ENCODE measurements at regions of chr9 and their contacts with region 1.

Region 1: GRCh38 chr9:72280913-72281500 is 84.0 kb downstream of the ZFAND5 start:
- DNase-seq: peak; percentile 79
- H3K4me3 Mint-ChIP-seq: no peak overlapping the region
- H3K27ac Mint-ChIP-seq: no peak overlapping the region
- H3K4me1 Mint-ChIP-seq: no peaks in the 10 kb centered on the region
- H3K27me3 Mint-ChIP-seq: no peaks in the 10 kb centered on the region

Region 2: GRCh38 chr9:72292256-72292682 is 11.3 kb after region 1 on chr9:
- CTCF ChIA-PET with region 1: interaction called, 51 read pairs
- POLR2A ChIA-PET with region 1: no interaction called
- intact Hi-C with region 1: no loop called
- DNase-seq: no peak
- H3K4me3 Mint-ChIP-seq: no peak overlapping the region
- H3K27ac Mint-ChIP-seq: no peak overlapping the region
- H3K4me1 Mint-ChIP-seq: no peaks in the 10 kb centered on the region
- H3K27me3 Mint-ChIP-seq: peaks cover 7% of the 10 kb centered on the region

Region 3: GRCh38 chr9:72599879-72600534 is 319.0 kb after region 1 on chr9:
- CTCF ChIA-PET with region 1: interaction called, 105 read pairs
- POLR2A ChIA-PET with region 1: no interaction called
- intact Hi-C with region 1: no loop called
- DNase-seq: no peak
- H3K4me3 Mint-ChIP-seq: no peak overlapping the region
- H3K27ac Mint-ChIP-seq: no peak overlapping the region
- H3K4me1 Mint-ChIP-seq: peaks cover 11% of the 10 kb centered on the region
- H3K27me3 Mint-ChIP-seq: no peaks in the 10 kb centered on the region

Region 4: GRCh38 chr9:72827950-72828731 is 547.1 kb after region 1 on chr9:
- CTCF ChIA-PET with region 1: interaction called, 86 read pairs
- POLR2A ChIA-PET with region 1: no interaction called
- intact Hi-C with region 1: no loop called
- DNase-seq: no peak
- H3K4me3 Mint-ChIP-seq: no peak overlapping the region
- H3K27ac Mint-ChIP-seq: no peak overlapping the region
- H3K4me1 Mint-ChIP-seq: no peaks in the 10 kb centered on the region
- H3K27me3 Mint-ChIP-seq: peaks cover 2% of the 10 kb centered on the region

Region 5: GRCh38 chr9:73081979-73082657 is 801.1 kb after region 1 on chr9:
- CTCF ChIA-PET with region 1: interaction called, 3 read pairs
- POLR2A ChIA-PET with region 1: no interaction called
- intact Hi-C with region 1: loop called (anchors 5 kb)
- DNase-seq: no peak
- H3K4me3 Mint-ChIP-seq: no peak overlapping the region
- H3K27ac Mint-ChIP-seq: no peak overlapping the region
- H3K4me1 Mint-ChIP-seq: no peaks in the 10 kb centered on the region
- H3K27me3 Mint-ChIP-seq: peaks cover 9% of the 10 kb centered on the region

Measured in activated CD4-positive, alpha-beta memory T cell treated with anti-CD3 and anti-CD28 coated beads for 36 hours (primary cell).